Panc1 (cell line): ENCODE measurements at regions of chr1 and their contacts with region 1.

Region 1: DNA sequence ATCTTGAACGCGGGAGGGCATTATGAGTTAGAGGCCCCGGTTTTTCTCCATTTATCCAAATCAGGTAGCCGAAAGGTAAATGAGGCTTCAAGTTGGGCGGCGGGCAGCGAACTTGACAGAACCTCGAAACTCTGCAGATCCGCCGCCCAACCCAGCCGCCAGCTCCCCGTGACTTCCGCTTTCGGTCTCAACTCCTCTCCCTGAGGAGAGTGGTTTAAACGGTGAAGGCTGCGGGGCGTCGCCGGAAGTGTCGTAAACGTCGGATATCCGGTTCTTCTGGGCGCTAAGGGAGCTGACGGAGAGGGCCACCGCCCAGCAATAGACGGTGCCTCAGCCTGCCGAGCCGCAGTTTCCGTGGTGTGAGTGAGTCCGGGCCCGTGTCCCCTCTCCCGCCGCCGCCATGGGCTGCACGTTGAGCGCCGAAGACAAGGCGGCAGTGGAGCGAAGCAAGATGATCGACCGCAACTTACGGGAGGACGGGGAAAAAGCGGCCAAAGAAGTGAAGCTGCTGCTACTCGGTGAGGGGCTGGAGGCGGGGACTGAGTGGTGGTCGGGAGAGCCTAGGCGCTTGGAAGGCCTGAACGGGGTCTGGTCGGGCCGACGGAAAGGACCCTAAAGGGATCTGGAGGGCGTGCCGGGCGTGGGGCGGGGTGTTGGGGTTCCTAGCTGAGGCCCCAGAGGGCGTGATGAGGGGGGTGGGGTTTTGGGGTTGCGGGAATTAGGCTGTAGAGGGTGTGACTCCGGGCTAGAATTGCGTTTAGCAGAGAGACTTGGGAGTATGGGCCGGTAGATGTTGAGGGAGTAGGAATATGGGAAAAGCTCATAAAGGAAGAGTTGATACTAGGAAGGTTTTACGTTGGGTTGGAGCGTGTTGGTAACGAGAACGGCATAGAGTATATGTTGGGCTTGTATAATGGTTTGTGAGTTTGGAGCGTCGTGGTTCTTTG is at the start of gene GNAI3:
- DNase-seq: peak; percentile 77
- ATAC-seq: peak; percentile 95
- H3K4me3 ChIP-seq: peak within 1 kb of the TSS; percentile 65 to 94
- H3K27ac ChIP-seq: peak within 1 kb of the TSS; percentile 98
- H3K4me1 ChIP-seq: peaks cover 9% of the 10 kb centered on the region; the same call in 1 of the 2 replicates
- H3K27me3 ChIP-seq: no peaks in the 10 kb centered on the region
- CTCF ChIP-seq: no peak
- total RNA-seq, gene GNAI3: 6.4 TPM

Region 2: GRCh38 chr1:109167001-109167506 is 381.5 kb before region 1 on chr1:
- CTCF ChIA-PET with region 1: no interaction called
- POLR2A ChIA-PET with region 1: no interaction called
- in situ Hi-C with region 1: no loop called
- intact Hi-C with region 1: no loop called
- DNase-seq: no peak
- ATAC-seq: no peak
- H3K4me3 ChIP-seq: no peak overlapping the region
- H3K27ac ChIP-seq: no peak overlapping the region
- H3K4me1 ChIP-seq: no peaks in the 10 kb centered on the region
- H3K27me3 ChIP-seq: no peaks in the 10 kb centered on the region
- CTCF ChIP-seq: no peak

Region 3: DNA sequence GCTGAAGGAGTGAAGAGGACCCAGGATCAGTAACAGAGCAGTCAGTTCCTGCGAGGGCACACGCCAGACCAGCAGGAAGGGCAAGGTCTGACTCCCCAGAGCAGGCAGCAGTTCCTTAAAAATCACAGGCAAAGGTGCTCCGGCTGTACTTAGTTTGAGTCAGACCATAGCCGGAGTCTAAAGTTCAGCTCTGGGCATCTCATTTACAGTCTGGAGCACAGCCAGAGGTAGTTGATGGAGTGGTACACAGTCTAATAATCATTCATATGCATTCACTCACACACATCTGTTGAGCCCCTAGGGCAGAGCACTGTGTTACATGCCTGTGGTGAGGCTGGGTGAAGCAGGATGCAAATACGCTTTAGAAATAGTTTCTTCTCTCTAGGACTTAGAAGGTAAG is 31.7 kb before region 1 on chr1:
- CTCF ChIA-PET with region 1: no interaction called
- POLR2A ChIA-PET with region 1: no interaction called
- in situ Hi-C with region 1: no loop called
- intact Hi-C with region 1: no loop called
- DNase-seq: no peak
- ATAC-seq: no peak
- H3K4me3 ChIP-seq: no peak overlapping the region
- H3K27ac ChIP-seq: no peak overlapping the region
- H3K4me1 ChIP-seq: no peaks in the 10 kb centered on the region
- H3K27me3 ChIP-seq: no peaks in the 10 kb centered on the region; the same call in 1 of the 2 replicates
- CTCF ChIP-seq: no peak

Region 4: GRCh38 chr1:109620841-109621286 is 72.3 kb after region 1 on chr1:
- CTCF ChIA-PET with region 1: interaction called, 3 read pairs
- POLR2A ChIA-PET with region 1: no interaction called
- in situ Hi-C with region 1: no loop called
- intact Hi-C with region 1: loop called (anchors 5 kb)
- DNase-seq: no peak
- ATAC-seq: peak; percentile 82
- H3K4me3 ChIP-seq: peak overlapping the region; percentile 84 to 92
- H3K27ac ChIP-seq: peak overlapping the region; percentile 94
- H3K4me1 ChIP-seq: peaks cover 15% of the 10 kb centered on the region
- H3K27me3 ChIP-seq: no peaks in the 10 kb centered on the region
- CTCF ChIP-seq: no peak

Region 5: GRCh38 chr1:109643385-109644230 is 95.0 kb after region 1 on chr1:
- CTCF ChIA-PET with region 1: interaction called, 10 read pairs
- POLR2A ChIA-PET with region 1: no interaction called
- in situ Hi-C with region 1: no loop called
- intact Hi-C with region 1: no loop called
- DNase-seq: no peak
- ATAC-seq: peak; percentile 94
- H3K4me3 ChIP-seq: peak overlapping the region in 1 of 2 experiments; percentile 8; a peak in 1 of 4 replicates
- H3K27ac ChIP-seq: peak overlapping the region; percentile 41
- H3K4me1 ChIP-seq: peaks cover 8% of the 10 kb centered on the region; the same call in 1 of the 2 replicates
- H3K27me3 ChIP-seq: no peaks in the 10 kb centered on the region
- CTCF ChIP-seq: peak; percentile 90